ENCODE measurements at regions of chr1 and their contacts with region 1.

Region 1: DNA sequence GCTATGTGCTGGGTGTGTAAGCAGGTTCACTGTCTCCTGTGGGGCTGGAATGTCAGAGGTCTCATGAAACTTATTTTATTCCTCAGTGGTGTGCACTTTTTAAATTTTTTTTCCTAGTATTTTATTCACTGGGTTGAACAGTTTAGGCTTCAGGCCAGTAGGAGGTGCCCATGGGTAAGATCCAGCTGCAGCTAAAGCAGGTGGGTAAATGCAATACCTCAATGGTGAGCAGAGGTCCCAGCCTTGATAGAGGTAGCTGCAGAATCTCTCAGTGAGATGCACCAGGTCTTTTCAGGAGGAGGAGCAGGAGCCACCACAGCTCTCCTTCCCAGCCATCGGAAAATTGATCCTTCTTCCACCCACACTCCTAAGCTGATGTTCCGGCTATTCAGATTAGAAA is 12.6 kb upstream of the OR6N2 start:
- DNase-seq: peak; percentile 12
- CTCF ChIP-seq: peak; percentile 70

Region 2: GRCh38 chr1:158998781-158999161 is 205.2 kb after region 1 on chr1:
- in situ Hi-C with region 1: loop called (anchors 10 kb)
- DNase-seq: peak; percentile 46
- CTCF ChIP-seq: peak; percentile 71